ENCODE measurements at regions of chr6 and their contacts with region 1.

Region 1: GRCh38 chr6:7900621-7901020 is 10.0 kb downstream of the TXNDC5 start:
- DNase-seq: no peak
- H3K4me3 ChIP-seq: no peak overlapping the region
- H3K27ac ChIP-seq: no peak overlapping the region
- H3K4me1 ChIP-seq: no peaks in the 10 kb centered on the region
- H3K27me3 ChIP-seq: no peaks in the 10 kb centered on the region
- CTCF ChIP-seq: no peak
- POLR2A ChIP-seq: no peak

Region 2: GRCh38 chr6:8000188-8000596 is 99.6 kb after region 1 on chr6:
- intact Hi-C with region 1: loop called (anchors 5 kb)
- DNase-seq: no peak
- H3K4me3 ChIP-seq: no peak overlapping the region
- H3K27ac ChIP-seq: no peak overlapping the region
- H3K4me1 ChIP-seq: no peaks in the 10 kb centered on the region
- H3K27me3 ChIP-seq: no peaks in the 10 kb centered on the region
- CTCF ChIP-seq: no peak
- POLR2A ChIP-seq: no peak